HepG2 (cell line): ENCODE measurements at regions of chr2 and their contacts with region 1.

Region 1: GRCh38 chr2:68121873-68122679 is 35.6 kb upstream of the PNO1 start:
- DNase-seq: peak; percentile 78
- ATAC-seq: peak; percentile 63
- H3K4me3 ChIP-seq: peak overlapping the region in 1 of 3 experiments; percentile 44; a peak in 1 of 6 replicates
- H3K27ac ChIP-seq: no peak overlapping the region
- H3K4me1 ChIP-seq: peaks cover 31% of the 10 kb centered on the region
- H3K27me3 ChIP-seq: no peaks in the 10 kb centered on the region
- CTCF ChIP-seq: peak; percentile 96
- EP300 ChIP-seq: no peak
- POLR2A ChIP-seq: no peak
- RAD21 ChIP-seq: peak; percentile 87

Region 2: GRCh38 chr2:67974559-67975430 is 147.3 kb before region 1 on chr2:
- CTCF ChIA-PET with region 1: no interaction called
- POLR2A ChIA-PET with region 1: no interaction called
- in situ Hi-C with region 1: no loop called
- intact Hi-C with region 1: no loop called
- DNase-seq: no peak
- ATAC-seq: no peak
- H3K4me3 ChIP-seq: no peak overlapping the region
- H3K27ac ChIP-seq: no peak overlapping the region
- H3K4me1 ChIP-seq: no peaks in the 10 kb centered on the region
- H3K27me3 ChIP-seq: 0 out of 5 replicates have a peak, but pooled peaks cover 0 to 1% of the 10 kb centered on the region in 2 experiments
- CTCF ChIP-seq: no peak
- EP300 ChIP-seq: no peak
- POLR2A ChIP-seq: no peak
- RAD21 ChIP-seq: no peak

Region 3: DNA sequence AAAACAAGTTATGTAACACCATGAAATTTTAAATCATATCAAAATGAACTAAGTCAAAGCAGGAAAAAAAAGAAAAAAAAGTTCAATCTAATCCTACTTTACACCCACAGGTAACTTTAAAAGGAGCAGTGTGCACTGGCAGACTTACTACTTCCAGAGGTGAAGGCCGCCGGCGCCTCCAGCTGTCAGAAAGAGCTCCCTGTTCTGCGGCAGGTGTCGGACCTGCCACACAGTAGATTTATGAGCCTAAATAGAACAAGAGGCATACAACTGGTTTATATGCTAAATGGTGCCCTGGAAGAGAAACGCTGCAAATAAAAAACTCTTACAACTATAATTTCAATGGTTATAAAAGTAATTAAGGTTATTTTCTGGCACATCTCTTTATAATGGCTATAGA is 12.5 kb after region 1 on chr2:
- CTCF ChIA-PET with region 1: no interaction called
- POLR2A ChIA-PET with region 1: no interaction called
- in situ Hi-C with region 1: no loop called
- intact Hi-C with region 1: no loop called
- DNase-seq: no peak
- ATAC-seq: no peak
- H3K4me3 ChIP-seq: no peak overlapping the region
- H3K27ac ChIP-seq: no peak overlapping the region
- H3K4me1 ChIP-seq: no peaks in the 10 kb centered on the region
- H3K27me3 ChIP-seq: no peaks in the 10 kb centered on the region
- CTCF ChIP-seq: no peak
- EP300 ChIP-seq: no peak
- POLR2A ChIP-seq: no peak
- RAD21 ChIP-seq: no peak

Region 4: DNA sequence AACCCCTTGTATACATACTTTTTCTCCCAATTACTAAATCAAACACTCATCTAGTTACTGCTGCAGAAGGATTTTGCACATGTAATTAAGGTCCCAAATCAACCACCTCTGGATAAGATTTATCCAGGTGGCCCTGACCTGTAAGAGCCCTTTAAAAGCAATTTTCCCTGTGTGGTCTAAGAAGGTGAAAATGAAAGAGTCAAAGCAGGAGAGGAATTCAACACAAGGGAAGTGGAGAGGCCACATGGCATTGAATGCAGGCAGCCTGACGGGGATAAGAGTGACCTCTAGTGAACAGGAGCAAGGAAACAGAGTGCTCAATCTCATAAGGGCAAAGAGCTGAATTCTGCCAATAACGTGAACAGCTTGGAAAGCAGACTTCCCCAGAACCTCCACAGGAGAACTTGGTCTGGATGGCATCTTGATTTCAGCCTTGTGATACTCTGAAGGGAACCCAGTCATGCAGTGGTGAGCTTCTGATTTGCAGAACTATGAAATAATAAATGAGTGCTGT is 103.1 kb after region 1 on chr2:
- CTCF ChIA-PET with region 1: interaction called, 3 read pairs
- POLR2A ChIA-PET with region 1: no interaction called
- in situ Hi-C with region 1: no loop called
- intact Hi-C with region 1: loop called (anchors 5 kb)
- DNase-seq: peak; percentile 68
- ATAC-seq: peak; percentile 99
- H3K4me3 ChIP-seq: no peak overlapping the region
- H3K27ac ChIP-seq: peak overlapping the region; percentile 13
- H3K4me1 ChIP-seq: peaks cover 34% of the 10 kb centered on the region
- H3K27me3 ChIP-seq: no peaks in the 10 kb centered on the region
- CTCF ChIP-seq: peak; percentile 84
- EP300 ChIP-seq: no peak
- POLR2A ChIP-seq: no peak
- RAD21 ChIP-seq: peak; percentile 41

Region 5: GRCh38 chr2:68282811-68283418 is 160.8 kb after region 1 on chr2:
- CTCF ChIA-PET with region 1: interaction called, 42 read pairs
- POLR2A ChIA-PET with region 1: no interaction called
- in situ Hi-C with region 1: no loop called
- intact Hi-C with region 1: loop called (anchors 1 kb)
- DNase-seq: peak; percentile 53
- ATAC-seq: peak; percentile 78
- H3K4me3 ChIP-seq: no peak overlapping the region
- H3K27ac ChIP-seq: no peak overlapping the region
- H3K4me1 ChIP-seq: peaks cover 9% of the 10 kb centered on the region
- H3K27me3 ChIP-seq: peaks cover 0 to 5% of the 10 kb centered on the region in 2 experiments; a peak in 1 of 5 replicates
- CTCF ChIP-seq: peak; percentile 72
- EP300 ChIP-seq: no peak
- POLR2A ChIP-seq: no peak
- RAD21 ChIP-seq: peak; percentile 58

Region 6: DNA sequence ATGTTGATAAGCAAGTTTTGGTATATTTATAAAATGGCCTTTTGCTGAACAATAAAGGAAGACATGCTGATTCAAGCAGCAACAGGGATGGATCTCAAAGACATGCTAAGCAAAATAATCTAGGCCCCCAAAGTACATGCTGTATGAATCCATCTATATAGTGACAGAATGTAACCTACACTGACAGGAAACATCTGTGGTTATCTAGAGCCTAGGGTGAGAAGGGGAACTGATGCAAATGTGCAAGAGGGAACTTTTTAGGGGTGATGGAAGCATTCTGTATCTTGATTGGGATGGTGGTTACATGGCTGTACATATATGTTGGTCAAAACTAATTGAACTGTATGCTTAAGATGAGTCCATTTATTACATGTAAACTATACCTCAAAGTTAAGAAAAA is 173.4 kb after region 1 on chr2:
- CTCF ChIA-PET with region 1: interaction called, 30 read pairs
- POLR2A ChIA-PET with region 1: no interaction called
- in situ Hi-C with region 1: loop called (anchors 5 kb)
- intact Hi-C with region 1: loop called (anchors 1 kb)
- DNase-seq: no peak
- ATAC-seq: no peak
- H3K4me3 ChIP-seq: no peak overlapping the region
- H3K27ac ChIP-seq: no peak overlapping the region
- H3K4me1 ChIP-seq: no peaks in the 10 kb centered on the region
- H3K27me3 ChIP-seq: no peaks in the 10 kb centered on the region; a peak in 1 of 5 replicates
- CTCF ChIP-seq: no peak
- EP300 ChIP-seq: no peak
- POLR2A ChIP-seq: no peak
- RAD21 ChIP-seq: no peak

Region 7: GRCh38 chr2:68362069-68362468 is 240.0 kb after region 1 on chr2:
- CTCF ChIA-PET with region 1: no interaction called
- POLR2A ChIA-PET with region 1: no interaction called
- in situ Hi-C with region 1: no loop called
- intact Hi-C with region 1: loop called (anchors 5 kb)
- DNase-seq: peak; percentile 66
- ATAC-seq: peak; percentile 64
- H3K4me3 ChIP-seq: no peak overlapping the region
- H3K27ac ChIP-seq: no peak overlapping the region
- H3K4me1 ChIP-seq: no peaks in the 10 kb centered on the region
- H3K27me3 ChIP-seq: peaks cover 0 to 22% of the 10 kb centered on the region in 2 experiments; a peak in 3 of 5 replicates
- CTCF ChIP-seq: peak; percentile 85
- EP300 ChIP-seq: peak in 1 of 2 experiments; percentile 24; a peak in 1 of 4 replicates
- POLR2A ChIP-seq: no peak
- RAD21 ChIP-seq: peak; percentile 57

Region 8: GRCh38 chr2:68441179-68441993 is 319.3 kb after region 1 on chr2:
- CTCF ChIA-PET with region 1: interaction called, 10 read pairs
- POLR2A ChIA-PET with region 1: no interaction called
- in situ Hi-C with region 1: loop called (anchors 10 kb)
- intact Hi-C with region 1: loop called (anchors 1 kb)
- DNase-seq: peak; percentile 89
- ATAC-seq: peak; percentile 94
- H3K4me3 ChIP-seq: no peak overlapping the region
- H3K27ac ChIP-seq: no peak overlapping the region
- H3K4me1 ChIP-seq: no peaks in the 10 kb centered on the region; the same call in 1 of the 2 replicates
- H3K27me3 ChIP-seq: peaks cover 0 to 11% of the 10 kb centered on the region in 2 experiments; a peak in 1 of 5 replicates
- CTCF ChIP-seq: peak; percentile 91
- EP300 ChIP-seq: no peak
- POLR2A ChIP-seq: no peak
- RAD21 ChIP-seq: peak; percentile 73; the same call in 1 of the 2 replicates